GM13976 (cell line): ENCODE measurements at regions of chr9 and their contacts with region 1.

Region 1: DNA sequence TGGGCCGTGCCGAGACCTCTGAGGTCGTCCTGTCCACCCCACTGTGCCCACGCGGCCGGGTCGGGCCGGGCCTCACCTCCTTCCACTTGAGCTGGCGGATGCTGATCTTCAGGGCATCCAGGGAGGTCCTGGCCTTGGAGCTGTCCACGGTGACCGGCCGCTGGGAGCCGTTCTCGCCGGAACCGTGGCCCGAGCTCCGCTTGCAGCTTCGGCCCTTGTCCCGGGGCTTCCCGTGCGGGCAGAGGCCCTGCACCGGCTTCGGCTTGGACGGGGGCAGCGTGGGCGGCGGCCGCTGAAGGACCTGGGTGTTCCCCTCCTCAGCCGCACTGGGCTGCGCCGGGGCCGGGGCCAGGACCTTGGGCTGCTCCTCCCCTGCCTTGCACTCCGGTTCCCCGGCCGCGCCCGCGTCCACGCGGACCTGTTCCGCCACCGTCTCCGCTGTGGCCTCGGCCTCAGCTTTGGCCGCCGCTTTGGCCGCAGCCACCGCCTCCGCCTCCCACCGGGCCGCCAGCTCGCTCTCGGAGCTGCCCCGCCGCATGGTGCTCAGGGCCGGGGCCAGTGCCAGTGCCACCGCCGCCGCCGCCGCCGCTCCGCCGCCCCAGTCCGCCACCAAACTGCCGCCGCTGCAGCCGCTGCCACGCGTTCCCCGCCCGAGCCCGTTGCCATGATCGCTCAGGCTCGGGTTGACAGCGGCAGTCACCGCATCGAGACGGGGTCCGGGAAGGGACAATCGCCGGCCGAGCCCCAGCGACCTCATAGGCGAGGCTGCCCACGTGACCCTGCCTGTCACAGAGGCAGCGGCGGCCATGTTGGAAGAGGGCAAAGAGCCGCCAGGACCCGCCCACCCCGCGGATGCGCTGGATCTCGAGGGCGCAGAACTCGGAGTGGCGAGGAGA is at the start of gene TTLL11:
- DNase-seq: peak; percentile 97
- CTCF ChIP-seq: no peak

Region 2: GRCh38 chr9:121331992-121332685 is 760.7 kb before region 1 on chr9:
- in situ Hi-C with region 1: no loop called
- DNase-seq: no peak
- CTCF ChIP-seq: no peak

Region 3: GRCh38 chr9:122350638-122351355 is 257.9 kb after region 1 on chr9:
- in situ Hi-C with region 1: loop called (anchors 10 kb)
- DNase-seq: peak; percentile 85
- CTCF ChIP-seq: peak; percentile 97